Mammary epithelial cell (primary cell): ENCODE measurements at regions of chr3 and their contacts with region 1.

Region 1: DNA sequence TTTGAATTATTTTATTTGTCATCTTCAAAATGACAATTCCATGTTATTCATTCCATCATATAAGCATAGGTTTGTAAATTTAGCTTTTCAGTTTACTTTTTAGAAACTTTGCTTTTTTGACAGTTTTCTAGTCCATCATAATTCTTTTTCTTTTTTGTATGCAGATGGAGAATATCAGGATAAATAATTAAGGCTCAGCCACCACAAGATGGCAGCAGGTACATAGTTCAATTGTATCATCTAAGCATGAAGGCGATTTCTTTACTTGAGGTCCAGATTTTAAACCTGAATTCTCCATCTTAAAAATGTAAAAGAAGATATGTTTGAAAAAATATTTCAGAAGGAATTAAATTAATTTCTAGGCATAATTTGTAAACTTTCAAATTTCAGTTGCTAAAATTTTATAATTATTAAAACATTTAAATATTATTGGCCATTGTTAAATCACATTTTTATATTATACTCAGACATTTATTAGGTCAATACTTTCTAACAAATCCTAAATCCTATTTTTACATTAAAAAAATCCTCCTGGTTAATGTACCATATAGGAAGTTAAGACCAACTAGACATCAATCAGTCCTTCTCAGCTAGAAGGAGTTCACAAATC is 15.1 kb downstream of the PLSCR5 start:
- DNase-seq: peak; percentile 36
- H3K4me3 ChIP-seq: no peak overlapping the region
- H3K27ac ChIP-seq: no peak overlapping the region
- H3K4me1 ChIP-seq: peaks cover 5% of the 10 kb centered on the region
- H3K27me3 ChIP-seq: no peaks in the 10 kb centered on the region
- CTCF ChIP-seq: peak; percentile 51 to 68

Region 2: GRCh38 chr3:146218880-146219866 is 370.8 kb before region 1 on chr3:
- CTCF ChIA-PET with region 1: no interaction called
- dilution Hi-C with region 1: no loop called
- in situ Hi-C with region 1: loop called (anchors 10 to 25 kb)
- intact Hi-C with region 1: no loop called
- DNase-seq: no peak
- H3K4me3 ChIP-seq: no peak overlapping the region
- H3K27ac ChIP-seq: no peak overlapping the region
- H3K4me1 ChIP-seq: peaks cover 11% of the 10 kb centered on the region
- H3K27me3 ChIP-seq: no peaks in the 10 kb centered on the region
- CTCF ChIP-seq: peak; percentile 49 to 61

Region 3: GRCh38 chr3:146640955-146641867 is 51.2 kb after region 1 on chr3:
- CTCF ChIA-PET with region 1: no interaction called
- dilution Hi-C with region 1: no loop called
- in situ Hi-C with region 1: no loop called
- intact Hi-C with region 1: loop called (anchors 1 kb)
- DNase-seq: peak; percentile 25
- H3K4me3 ChIP-seq: no peak overlapping the region
- H3K27ac ChIP-seq: no peak overlapping the region
- H3K4me1 ChIP-seq: no peaks in the 10 kb centered on the region
- H3K27me3 ChIP-seq: no peaks in the 10 kb centered on the region
- CTCF ChIP-seq: peak; percentile 60 to 64